Motor neuron (in vitro differentiated cells): ENCODE measurements at regions of chr11 and their contacts with region 1.

Region 1: DNA sequence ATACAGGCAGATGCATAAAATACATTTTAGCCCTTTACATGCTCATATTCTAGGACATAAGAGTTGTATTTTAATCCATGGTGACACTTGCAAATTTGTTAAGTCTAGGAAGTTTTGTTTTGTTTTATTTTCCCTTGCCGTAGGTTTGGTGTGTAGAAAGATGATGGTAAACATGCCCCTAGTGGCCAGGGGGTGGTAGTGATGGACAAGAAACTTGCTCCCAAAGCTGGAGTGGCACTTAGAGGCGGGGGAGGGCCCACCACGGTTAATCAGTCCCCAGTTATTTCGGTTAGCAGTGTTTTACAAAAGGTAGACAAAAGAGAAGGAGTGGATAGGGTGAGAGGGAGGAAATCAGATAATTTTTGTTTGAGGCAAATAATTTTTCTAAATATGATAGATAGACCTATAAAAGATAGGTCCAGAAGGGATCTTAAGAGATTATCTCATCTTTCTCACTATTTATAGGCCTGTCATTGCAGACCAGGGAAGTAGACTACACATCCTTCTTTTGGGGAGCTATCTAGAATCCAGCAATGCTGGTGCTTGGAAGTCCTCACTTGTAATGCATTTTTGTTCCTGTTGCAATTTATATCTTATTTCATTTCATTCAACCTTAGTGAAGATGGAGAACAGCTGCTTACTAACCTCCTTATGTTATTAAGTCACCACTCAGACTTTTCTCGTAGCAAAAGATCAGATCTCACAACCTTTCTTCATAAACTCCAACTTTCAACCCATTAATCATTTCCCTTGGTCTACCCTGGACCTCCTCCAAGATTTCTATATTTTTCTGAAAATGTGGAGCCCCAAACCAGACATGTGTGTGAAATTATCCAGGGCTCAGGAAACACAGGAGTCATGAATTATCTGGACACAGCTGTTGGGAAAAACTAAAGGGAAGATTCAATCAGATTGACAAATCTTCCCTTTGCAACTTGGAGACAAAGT is 5.9 kb upstream of the BDNF start:
- ATAC-seq: peak in 3 of 8 experiments; percentile 5 to 38 (median 10)
- H3K4me3 ChIP-seq: no peak overlapping the region
- H3K27ac ChIP-seq: no peak overlapping the region
- H3K4me1 ChIP-seq: no peaks in the 10 kb centered on the region

Region 2: DNA sequence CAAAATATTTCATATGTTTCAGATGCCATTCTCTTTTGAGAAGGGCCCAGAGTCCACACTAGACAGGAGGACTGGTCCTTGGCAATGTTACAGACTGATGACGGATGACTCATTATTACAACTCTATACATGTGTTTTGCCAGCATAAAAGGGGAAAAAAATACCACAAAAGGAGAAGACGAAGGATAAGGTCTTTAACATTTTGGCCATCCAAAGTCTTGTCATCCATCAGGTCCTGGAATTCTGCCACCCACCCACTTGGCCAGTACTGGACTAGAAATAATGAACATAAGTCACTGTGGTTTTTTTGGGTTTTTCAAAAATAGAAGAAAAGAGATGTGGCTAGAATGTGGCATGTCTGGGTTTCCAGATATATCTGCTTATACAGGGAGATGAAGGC is 51.8 kb after region 1 on chr11:
- in situ Hi-C with region 1: no loop called
- ATAC-seq: peak in 1 of 8 experiments; percentile 33
- H3K4me3 ChIP-seq: no peak overlapping the region
- H3K27ac ChIP-seq: no peak overlapping the region
- H3K4me1 ChIP-seq: no peaks in the 10 kb centered on the region

Region 3: GRCh38 chr11:28146123-28146751 is 440.1 kb after region 1 on chr11:
- in situ Hi-C with region 1: loop called in 1 of 9 experiments (anchors 25 kb)
- ATAC-seq: peak in 3 of 8 experiments; percentile 19 to 96 (median 94)
- H3K4me3 ChIP-seq: no peak overlapping the region
- H3K27ac ChIP-seq: no peak overlapping the region
- H3K4me1 ChIP-seq: no peaks in the 10 kb centered on the region

Region 4: GRCh38 chr11:28529540-28530410 is 823.6 kb after region 1 on chr11:
- in situ Hi-C with region 1: loop called in 1 of 9 experiments (anchors 25 kb)
- ATAC-seq: peak in 3 of 8 experiments; percentile 57 to 75 (median 61)
- H3K4me3 ChIP-seq: no peak overlapping the region
- H3K27ac ChIP-seq: no peak overlapping the region
- H3K4me1 ChIP-seq: no peaks in the 10 kb centered on the region

Region 5: GRCh38 chr11:28697920-28698827 is 992.0 kb after region 1 on chr11:
- in situ Hi-C with region 1: loop called in 4 of 9 experiments (anchors 10 to 25 kb)
- ATAC-seq: peak in 4 of 8 experiments; percentile 34 to 73 (median 62)
- H3K4me3 ChIP-seq: no peak overlapping the region
- H3K27ac ChIP-seq: no peak overlapping the region
- H3K4me1 ChIP-seq: no peaks in the 10 kb centered on the region

Region 6: DNA sequence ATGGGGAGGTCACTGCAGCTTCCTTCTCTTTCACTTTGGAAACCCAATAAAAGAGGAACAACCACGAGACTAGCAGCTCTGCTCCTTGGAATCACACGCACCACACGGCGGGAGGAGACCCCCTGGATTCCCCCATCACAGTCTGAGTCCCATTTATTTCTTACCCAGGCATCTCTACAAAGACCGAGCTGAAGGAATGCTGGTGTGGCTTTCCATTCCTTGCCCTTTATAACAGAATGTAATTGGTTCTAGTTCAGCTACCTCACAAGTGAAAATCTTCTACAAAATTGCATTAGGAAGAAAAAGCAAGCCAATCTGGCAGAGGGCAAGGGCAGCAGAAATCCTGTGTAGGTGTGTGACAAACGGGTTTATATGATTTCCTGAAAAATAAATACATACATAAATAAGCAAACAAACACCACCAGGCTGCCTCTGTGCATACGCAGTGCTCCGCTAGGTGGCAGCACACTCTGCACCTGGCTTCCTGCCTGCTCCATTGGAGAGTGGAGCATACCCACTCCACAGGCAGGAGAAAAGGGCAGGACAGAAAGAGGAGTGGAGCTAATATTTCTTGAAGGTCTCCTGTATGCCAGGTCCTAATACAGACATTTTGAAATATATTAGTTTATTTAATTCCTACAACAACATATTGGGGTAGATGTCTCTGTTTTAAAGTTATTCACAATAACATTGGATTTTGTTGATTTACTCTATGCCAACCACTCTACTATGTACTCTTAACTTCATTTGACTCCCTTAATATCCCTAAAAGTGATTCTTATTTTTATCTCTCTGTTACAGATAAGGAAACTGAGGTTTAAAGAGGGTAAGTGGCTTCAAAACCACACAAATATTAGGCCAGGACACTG is 1637.6 kb after region 1 on chr11:
- in situ Hi-C with region 1: loop called in 5 of 9 experiments (anchors 25 kb)
- ATAC-seq: peak; percentile 70 to 99 (median 84)
- H3K4me3 ChIP-seq: no peak overlapping the region
- H3K27ac ChIP-seq: no peak overlapping the region
- H3K4me1 ChIP-seq: no peaks in the 10 kb centered on the region